ENCODE measurements at regions of chr14 and their contacts with region 1.

Region 1: DNA sequence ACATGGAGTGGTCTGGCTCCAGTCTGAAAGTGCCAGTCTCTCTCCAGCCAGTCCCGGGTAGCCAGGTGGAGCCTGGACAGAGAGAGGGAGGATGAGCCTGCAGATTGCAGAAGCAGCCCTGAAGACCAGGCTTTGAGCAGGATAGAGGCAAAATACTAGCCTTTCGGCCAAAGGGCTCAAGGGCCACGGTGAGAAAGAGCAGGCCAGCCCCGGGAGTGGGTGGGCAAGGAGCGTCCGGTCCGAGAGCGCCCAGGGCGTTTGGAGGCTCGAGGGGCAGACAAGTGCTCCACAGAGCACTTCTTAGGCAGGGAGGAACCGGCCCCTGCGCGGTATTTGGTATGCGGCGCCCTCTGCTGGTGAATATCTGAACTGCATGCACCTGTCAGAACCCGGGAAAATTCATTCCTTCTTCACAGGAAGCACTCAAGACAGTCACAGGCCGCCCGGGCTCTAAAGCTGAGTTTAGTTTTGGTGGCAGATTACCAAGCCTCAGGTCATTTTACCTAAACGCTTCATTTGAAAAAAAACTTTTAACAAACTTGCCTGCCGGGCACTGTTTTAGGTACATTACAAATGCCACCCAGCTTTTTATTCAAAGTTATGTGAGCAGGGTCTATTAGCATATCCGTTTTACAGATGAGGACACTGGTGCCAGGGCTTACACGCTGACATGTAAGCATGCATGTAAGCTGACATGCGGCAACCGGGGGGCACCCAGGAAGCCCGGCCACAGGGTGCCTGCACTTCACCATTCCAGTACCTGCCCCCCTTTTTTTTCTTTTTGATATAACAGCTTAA is 21.0 kb upstream of the PSMC1 start:
- DNase-seq: peak; percentile 89
- ATAC-seq: peak; percentile 96
- H3K4me3 Mint-ChIP-seq: no peak overlapping the region
- H3K27ac Mint-ChIP-seq: no peak overlapping the region
- H3K4me1 Mint-ChIP-seq: no peaks in the 10 kb centered on the region
- H3K27me3 Mint-ChIP-seq: peaks cover 71% of the 10 kb centered on the region
- CTCF ChIP-seq: peak; percentile 99

Region 2: GRCh38 chr14:89986462-89987160 is 248.8 kb before region 1 on chr14:
- CTCF ChIA-PET with region 1: interaction called, 12 read pairs
- POLR2A ChIA-PET with region 1: no interaction called
- DNase-seq: no peak
- ATAC-seq: peak; percentile 66
- H3K4me3 Mint-ChIP-seq: peak overlapping the region; percentile 22
- H3K27ac Mint-ChIP-seq: peak overlapping the region; percentile 78
- H3K4me1 Mint-ChIP-seq: peaks cover 41% of the 10 kb centered on the region
- H3K27me3 Mint-ChIP-seq: no peaks in the 10 kb centered on the region
- CTCF ChIP-seq: no peak

Region 3: GRCh38 chr14:90060312-90060964 is 174.9 kb before region 1 on chr14:
- CTCF ChIA-PET with region 1: interaction called, 15 read pairs
- POLR2A ChIA-PET with region 1: no interaction called
- DNase-seq: peak; percentile 81
- ATAC-seq: peak; percentile 82
- H3K4me3 Mint-ChIP-seq: peak overlapping the region; percentile 73
- H3K27ac Mint-ChIP-seq: no peak overlapping the region
- H3K4me1 Mint-ChIP-seq: peaks cover 28% of the 10 kb centered on the region
- H3K27me3 Mint-ChIP-seq: peaks cover 82% of the 10 kb centered on the region
- CTCF ChIP-seq: peak; percentile 47; the same call in 1 of the 2 replicates

Region 4: DNA sequence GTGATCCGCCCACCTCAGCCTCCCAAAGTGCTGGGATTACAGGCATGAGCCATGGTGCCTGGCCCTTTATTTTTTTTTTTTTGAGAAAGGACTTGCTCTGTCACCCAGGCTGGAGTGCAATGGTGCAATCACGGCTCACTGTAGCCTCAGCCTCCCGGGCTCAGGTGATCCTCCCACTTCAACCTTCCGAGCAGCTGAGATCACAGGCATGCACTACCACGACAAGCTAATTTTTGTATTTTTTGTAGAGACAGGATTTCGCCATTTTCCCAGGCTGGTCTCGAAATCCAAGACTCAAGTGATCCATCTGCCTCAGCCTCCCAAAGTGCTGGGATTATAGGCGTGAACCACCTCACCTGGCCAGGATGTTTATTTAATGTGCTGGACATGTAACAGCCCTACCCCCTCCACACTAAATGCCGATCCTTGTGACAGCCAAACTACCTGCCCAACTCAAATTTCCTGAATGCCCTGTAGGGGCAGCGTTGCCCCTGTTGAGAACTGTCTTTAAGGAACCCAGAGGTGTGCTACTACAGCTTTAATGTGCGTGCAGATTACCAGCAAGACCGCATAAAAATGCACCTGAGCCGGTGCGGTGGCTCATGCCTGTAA is 125.6 kb before region 1 on chr14:
- CTCF ChIA-PET with region 1: interaction called, 10 read pairs
- POLR2A ChIA-PET with region 1: interaction called, 3 read pairs
- DNase-seq: peak; percentile 50
- ATAC-seq: peak; percentile 97
- H3K4me3 Mint-ChIP-seq: no peak overlapping the region
- H3K27ac Mint-ChIP-seq: no peak overlapping the region
- H3K4me1 Mint-ChIP-seq: peaks cover 4% of the 10 kb centered on the region
- H3K27me3 Mint-ChIP-seq: peaks cover 7% of the 10 kb centered on the region; the same call in 1 of the 2 replicates
- CTCF ChIP-seq: no peak